ENCODE measurements at regions of chr9 and their contacts with region 1.

Region 1: DNA sequence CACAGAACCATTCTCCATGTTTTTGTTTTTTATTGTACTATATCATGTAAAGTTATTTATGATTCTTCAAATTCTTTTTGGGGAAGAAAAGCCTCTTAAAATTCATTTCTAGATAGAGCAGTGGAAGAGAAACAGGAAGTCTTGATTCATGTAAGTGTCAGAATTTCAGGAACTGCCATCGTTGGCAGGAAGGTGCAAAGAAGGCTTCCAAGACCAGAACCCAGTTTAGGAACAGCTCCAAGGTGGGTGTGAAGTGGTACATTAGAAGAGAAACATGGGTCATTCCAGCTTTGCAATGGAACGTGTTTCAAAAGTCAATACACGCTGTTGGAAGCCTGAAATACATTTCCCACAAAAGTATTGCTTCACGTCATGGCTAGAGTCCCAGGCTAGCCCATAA is 14.8 kb downstream of the SAXO1 start:
- DNase-seq: no peak
- H3K4me3 ChIP-seq: no peak overlapping the region
- H3K27ac ChIP-seq: no peak overlapping the region
- H3K4me1 ChIP-seq: peaks cover 0 to 3% (median under 1%) of the 10 kb centered on the region in 4 donors
- H3K27me3 ChIP-seq: no peaks in the 10 kb centered on the region
- CTCF ChIP-seq: no peak
- EP300 ChIP-seq: no peak
- POLR2A ChIP-seq: no peak

Region 2: GRCh38 chr9:18692268-18692667 is 325.9 kb before region 1 on chr9:
- intact Hi-C with region 1: loop called (anchors 10 kb)
- DNase-seq: no peak
- H3K4me3 ChIP-seq: no peak overlapping the region
- H3K27ac ChIP-seq: no peak overlapping the region
- H3K4me1 ChIP-seq: no peaks in the 10 kb centered on the region
- H3K27me3 ChIP-seq: no peaks in the 10 kb centered on the region
- CTCF ChIP-seq: no peak
- EP300 ChIP-seq: no peak
- POLR2A ChIP-seq: no peak